ENCODE measurements at regions of chr16 and their contacts with region 1.

Region 1: DNA sequence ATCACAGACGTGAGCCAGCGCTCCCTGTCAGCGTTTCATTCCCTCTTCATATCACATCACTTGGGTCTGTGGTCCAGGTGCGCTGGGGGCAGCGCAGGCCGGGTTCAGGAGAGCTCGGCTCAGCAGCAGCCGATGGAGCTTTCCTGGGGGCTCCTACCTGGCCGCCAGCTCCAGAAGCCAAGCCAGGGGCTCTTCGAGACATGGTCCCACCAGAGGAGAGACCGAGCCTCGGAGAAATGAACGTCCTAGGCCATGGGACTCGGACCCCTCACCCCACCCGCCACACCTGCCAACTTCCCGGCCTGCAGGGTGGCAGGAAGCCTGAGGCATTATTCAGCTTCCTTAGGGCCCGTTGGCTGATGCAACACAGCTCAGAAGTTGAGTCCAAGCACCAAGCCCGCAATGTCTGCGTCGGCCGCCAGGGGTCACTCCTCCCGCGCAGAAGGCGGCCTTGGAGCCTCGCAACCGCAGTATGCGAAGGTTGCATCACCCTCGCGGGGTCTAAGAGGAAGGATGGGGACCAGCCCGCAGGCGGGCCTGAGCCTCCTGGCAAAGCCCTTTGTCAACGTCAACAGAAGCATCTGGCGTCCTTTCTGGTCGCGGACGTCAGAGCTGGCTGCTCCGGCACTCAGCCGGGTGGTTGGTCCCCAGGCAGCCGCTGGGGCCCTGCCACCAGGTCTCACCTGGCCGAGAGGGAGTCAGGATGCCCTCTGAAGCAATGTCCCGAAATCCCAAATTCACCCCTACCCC is 13.2 kb upstream of the KLHDC4 start:
- DNase-seq: peak; percentile 98
- H3K4me3 Mint-ChIP-seq: peak overlapping the region; percentile 89
- H3K27ac Mint-ChIP-seq: peak overlapping the region; percentile 99
- H3K4me1 Mint-ChIP-seq: peaks cover 48% of the 10 kb centered on the region
- H3K27me3 Mint-ChIP-seq: no peaks in the 10 kb centered on the region

Region 2: GRCh38 chr16:87571136-87571867 is 207.7 kb before region 1 on chr16:
- CTCF ChIA-PET with region 1: no interaction called
- intact Hi-C with region 1: no loop called
- DNase-seq: peak; percentile 58
- H3K4me3 Mint-ChIP-seq: no peak overlapping the region
- H3K27ac Mint-ChIP-seq: no peak overlapping the region
- H3K4me1 Mint-ChIP-seq: no peaks in the 10 kb centered on the region
- H3K27me3 Mint-ChIP-seq: peaks cover 7% of the 10 kb centered on the region

Region 3: DNA sequence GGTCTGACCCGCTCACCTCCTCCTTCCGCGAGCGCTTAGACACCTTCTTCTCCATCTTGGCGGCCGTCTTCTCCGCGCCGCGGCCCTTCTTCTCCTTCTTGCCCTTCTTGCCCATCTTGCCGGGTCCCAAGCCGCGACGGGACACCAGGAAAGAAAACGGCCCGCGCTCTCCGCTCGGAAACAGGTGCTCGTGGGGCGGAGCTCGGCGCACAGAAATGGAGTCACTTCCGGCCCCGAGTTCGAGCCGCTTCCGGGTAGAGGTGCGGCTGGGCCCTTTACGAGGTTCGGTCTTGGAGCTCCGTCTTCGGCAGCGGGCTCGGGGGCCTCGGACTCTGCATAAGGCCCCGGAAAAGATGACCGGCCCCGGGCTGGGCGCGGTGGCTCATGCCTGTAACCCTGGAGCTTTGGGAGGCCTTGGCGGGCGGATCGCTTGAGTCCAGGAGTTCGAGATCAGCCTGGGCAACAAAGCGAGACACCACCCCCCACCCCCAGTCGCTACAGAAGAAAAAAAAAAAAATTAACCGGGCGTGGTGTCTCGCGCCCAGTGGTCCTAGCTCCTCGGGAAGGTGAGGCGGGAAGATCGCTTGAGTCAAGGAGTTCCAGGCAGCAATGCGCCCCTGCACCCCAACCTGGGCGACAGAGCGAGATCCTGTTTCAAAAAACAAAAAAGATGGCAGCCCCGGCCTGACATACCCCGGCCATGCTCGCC is 13.1 kb before region 1 on chr16 and contains the start of gene KLHDC4:
- CTCF ChIA-PET with region 1: interaction called, 16 read pairs
- intact Hi-C with region 1: no loop called
- DNase-seq: peak; percentile 93
- H3K4me3 Mint-ChIP-seq: peak within 1 kb of the TSS; percentile 100
- H3K27ac Mint-ChIP-seq: peak within 1 kb of the TSS; percentile 96
- H3K4me1 Mint-ChIP-seq: peaks cover 43% of the 10 kb centered on the region
- H3K27me3 Mint-ChIP-seq: no peaks in the 10 kb centered on the region
- total RNA-seq, gene KLHDC4: 56.2 to 62.4 TPM

Region 4: GRCh38 chr16:87853411-87854052 is 74.5 kb after region 1 on chr16:
- CTCF ChIA-PET with region 1: interaction called, 55 read pairs
- intact Hi-C with region 1: loop called (anchors 1 kb)
- DNase-seq: peak; percentile 97
- H3K4me3 Mint-ChIP-seq: peak overlapping the region; percentile 61
- H3K27ac Mint-ChIP-seq: peak overlapping the region; percentile 90
- H3K4me1 Mint-ChIP-seq: peaks cover 73% of the 10 kb centered on the region
- H3K27me3 Mint-ChIP-seq: no peaks in the 10 kb centered on the region

Region 5: GRCh38 chr16:87877938-87878507 is 99.0 kb after region 1 on chr16:
- CTCF ChIA-PET with region 1: interaction called, 192 read pairs
- intact Hi-C with region 1: no loop called
- DNase-seq: peak; percentile 71
- H3K4me3 Mint-ChIP-seq: no peak overlapping the region
- H3K27ac Mint-ChIP-seq: no peak overlapping the region
- H3K4me1 Mint-ChIP-seq: peaks cover 47% of the 10 kb centered on the region
- H3K27me3 Mint-ChIP-seq: peaks cover 5% of the 10 kb centered on the region

Region 6: DNA sequence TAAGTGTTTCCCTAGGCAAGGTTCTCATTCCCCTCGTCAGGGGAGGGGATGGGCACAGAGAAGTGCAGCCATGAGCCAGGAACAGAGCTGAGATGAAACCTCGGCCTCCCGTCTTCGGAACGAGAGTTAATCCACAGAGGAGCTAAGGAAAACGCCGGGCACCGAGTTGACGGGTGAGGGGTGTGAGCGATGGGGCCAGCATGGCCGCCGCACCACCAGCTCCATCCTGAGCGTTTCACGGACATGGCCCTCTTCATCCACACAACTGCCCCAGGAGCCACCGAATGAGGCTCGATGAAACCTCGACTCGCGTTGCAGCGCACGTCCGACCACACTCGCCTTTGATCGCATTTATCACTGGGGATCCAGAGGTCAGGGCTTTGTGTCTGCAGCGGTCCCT is 135.8 kb after region 1 on chr16:
- CTCF ChIA-PET with region 1: interaction called, 11 read pairs
- intact Hi-C with region 1: no loop called
- DNase-seq: no peak
- H3K4me3 Mint-ChIP-seq: no peak overlapping the region
- H3K27ac Mint-ChIP-seq: no peak overlapping the region
- H3K4me1 Mint-ChIP-seq: peaks cover 3% of the 10 kb centered on the region
- H3K27me3 Mint-ChIP-seq: no peaks in the 10 kb centered on the region

Region 7: DNA sequence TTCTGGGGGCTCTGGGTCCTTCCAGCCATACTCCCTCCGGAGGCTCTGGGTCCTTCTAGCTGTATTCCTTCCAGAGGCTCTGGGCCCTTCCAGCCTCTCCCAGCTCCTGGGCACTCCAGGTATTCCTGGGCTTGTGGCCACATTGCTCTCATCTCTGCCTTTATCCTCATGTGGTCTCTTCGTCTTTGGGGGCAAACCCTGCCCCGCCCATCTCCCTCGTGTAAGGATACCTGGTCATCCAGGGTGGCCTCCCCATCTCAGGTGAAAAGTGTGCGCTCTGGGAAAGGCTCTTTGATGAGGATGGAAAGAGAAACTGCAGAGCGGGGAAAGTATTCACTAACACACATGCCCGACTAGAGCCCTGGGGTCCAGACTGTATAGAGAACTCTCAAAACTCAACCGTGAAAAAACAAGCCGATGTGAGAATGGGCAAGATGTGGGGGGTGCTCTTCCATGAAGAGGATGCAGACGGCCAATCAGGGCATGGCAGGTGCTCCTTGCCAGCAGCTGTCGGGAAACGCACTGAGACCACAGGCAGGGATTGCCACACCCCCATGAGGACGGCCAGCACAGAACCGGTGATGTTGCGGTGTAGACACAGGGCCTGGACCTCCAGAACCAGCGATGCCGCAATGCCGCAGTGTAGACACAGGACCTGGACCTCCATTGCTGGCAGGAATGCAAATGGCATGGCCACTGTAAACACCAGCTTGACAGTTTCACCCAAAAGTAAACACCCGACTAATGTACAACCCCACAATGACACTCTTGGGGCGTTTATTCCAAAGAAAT is 336.9 kb after region 1 on chr16:
- CTCF ChIA-PET with region 1: no interaction called
- intact Hi-C with region 1: no loop called
- DNase-seq: no peak
- H3K4me3 Mint-ChIP-seq: no peak overlapping the region
- H3K27ac Mint-ChIP-seq: no peak overlapping the region
- H3K4me1 Mint-ChIP-seq: peaks cover 3% of the 10 kb centered on the region
- H3K27me3 Mint-ChIP-seq: no peaks in the 10 kb centered on the region

Region 8: DNA sequence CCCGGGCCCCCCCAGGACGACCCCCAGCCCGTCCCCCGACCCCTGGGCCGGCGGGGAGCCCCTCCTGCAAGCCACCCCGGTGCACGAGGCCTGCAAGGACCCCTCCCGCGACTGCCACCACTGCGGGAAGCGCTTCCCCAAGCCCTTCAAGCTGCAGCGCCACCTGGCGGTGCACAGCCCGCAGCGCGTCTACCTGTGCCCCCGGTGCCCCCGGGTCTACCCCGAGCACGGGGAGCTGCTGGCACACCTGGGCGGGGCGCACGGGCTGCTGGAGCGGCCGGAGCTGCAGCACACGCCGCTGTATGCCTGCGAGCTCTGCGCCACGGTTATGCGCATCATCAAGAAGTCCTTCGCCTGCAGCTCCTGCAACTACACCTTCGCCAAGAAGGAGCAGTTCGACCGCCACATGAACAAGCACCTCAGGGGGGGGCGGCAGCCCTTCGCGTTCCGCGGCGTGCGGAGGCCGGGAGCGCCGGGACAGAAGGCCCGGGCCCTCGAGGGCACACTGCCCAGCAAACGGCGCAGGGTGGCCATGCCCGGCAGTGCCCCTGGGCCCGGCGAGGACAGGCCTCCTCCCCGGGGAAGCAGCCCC is 658.5 kb after region 1 on chr16:
- CTCF ChIA-PET with region 1: interaction called, 3 read pairs
- intact Hi-C with region 1: loop called (anchors 2 kb)
- DNase-seq: peak; percentile 64
- H3K4me3 Mint-ChIP-seq: no peak overlapping the region
- H3K27ac Mint-ChIP-seq: no peak overlapping the region
- H3K4me1 Mint-ChIP-seq: no peaks in the 10 kb centered on the region
- H3K27me3 Mint-ChIP-seq: no peaks in the 10 kb centered on the region